ENCODE measurements at regions of chr12 and their contacts with region 1.

Region 1: DNA sequence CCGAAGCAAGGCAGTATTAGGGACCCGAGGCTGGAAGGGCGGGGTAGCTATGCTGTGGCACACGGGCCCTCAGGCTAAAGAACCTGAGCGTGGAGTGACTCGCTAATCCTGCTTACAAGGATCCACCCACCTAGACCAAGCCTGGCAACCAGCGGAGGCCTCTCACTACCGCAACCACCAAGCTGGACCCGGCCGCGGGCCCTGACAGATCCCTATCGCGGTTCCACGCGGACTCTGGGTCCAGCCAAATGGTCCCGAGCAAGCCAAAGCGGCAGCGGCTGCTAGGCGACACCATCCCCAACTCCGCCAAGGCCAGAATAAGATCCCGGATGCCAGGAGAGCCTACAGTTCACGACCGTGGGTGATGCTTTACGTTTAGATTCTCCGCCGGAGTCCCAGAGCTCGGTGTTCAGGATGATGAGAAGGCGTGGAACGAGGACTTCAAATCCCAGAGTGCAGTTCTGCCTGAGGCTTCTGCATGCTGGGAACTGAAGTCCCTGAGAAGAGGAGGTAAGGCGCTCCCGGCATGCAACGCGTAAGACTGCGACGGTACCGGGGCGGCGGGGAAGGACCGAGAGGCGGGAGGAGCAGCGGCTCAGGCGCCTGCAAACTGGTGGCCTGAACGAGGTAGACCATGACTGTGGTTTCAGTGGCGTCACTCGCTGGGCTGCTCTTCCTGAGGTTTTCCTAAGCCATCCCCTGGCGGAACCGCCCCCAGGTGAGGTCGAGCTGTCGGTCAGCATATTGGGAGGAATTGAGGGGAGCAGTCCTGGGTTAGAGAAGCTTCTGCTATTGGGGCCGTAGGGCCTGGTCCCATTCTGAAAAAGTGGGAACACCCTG is at the starts of genes CEP290 and TMTC3:
- DNase-seq: peak; percentile 95
- H3K4me3 Mint-ChIP-seq: peak within 1 kb of the TSS; percentile 91
- H3K27ac Mint-ChIP-seq: peak within 1 kb of the TSS; percentile 90
- H3K4me1 Mint-ChIP-seq: peaks cover 40% of the 10 kb centered on the region
- H3K27me3 Mint-ChIP-seq: no peaks in the 10 kb centered on the region
- total RNA-seq, gene CEP290: 12.7 to 13.6 TPM
- total RNA-seq, gene TMTC3: 5.2 TPM

Region 2: GRCh38 chr12:88127099-88127498 is 14.9 kb before region 1 on chr12:
- CTCF ChIA-PET with region 1: no interaction called
- intact Hi-C with region 1: no loop called
- DNase-seq: no peak
- H3K4me3 Mint-ChIP-seq: no peak overlapping the region
- H3K27ac Mint-ChIP-seq: no peak overlapping the region
- H3K4me1 Mint-ChIP-seq: no peaks in the 10 kb centered on the region
- H3K27me3 Mint-ChIP-seq: no peaks in the 10 kb centered on the region

Region 3: DNA sequence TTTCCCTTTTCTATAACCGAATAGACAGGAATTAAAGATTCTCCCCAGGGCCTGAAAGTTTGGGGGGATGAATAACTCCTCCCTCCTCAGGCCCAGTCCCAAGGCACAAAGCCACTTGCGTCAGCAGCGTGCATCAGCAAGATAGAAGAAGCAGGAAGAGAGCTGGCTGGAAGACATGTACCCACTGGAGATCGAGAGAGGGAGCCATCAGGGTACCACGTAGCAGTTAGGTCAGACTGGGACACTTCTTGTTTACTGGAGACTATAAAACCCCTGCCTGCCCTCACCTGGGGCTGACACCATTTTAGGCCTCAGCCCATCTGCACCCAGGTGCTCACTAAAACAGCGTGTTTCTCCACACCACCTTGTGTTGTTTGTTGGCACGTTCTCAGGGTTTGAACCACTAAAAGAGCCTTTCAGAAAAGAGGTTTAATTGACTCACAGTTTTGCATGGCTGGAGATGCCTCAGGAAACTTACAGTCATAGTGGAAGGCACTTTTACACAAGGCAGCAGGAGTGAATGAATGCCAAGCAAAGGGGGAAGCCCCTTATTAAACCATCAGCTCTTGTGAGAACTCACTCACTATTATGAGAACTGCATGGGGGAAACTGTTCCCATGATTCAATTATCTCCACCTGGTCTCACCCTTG is 93.3 kb after region 1 on chr12:
- CTCF ChIA-PET with region 1: interaction called, 6 read pairs
- intact Hi-C with region 1: loop called (anchors 1 kb)
- DNase-seq: peak; percentile 65
- H3K4me3 Mint-ChIP-seq: no peak overlapping the region
- H3K27ac Mint-ChIP-seq: no peak overlapping the region
- H3K4me1 Mint-ChIP-seq: peaks cover 29% of the 10 kb centered on the region
- H3K27me3 Mint-ChIP-seq: peaks cover 4% of the 10 kb centered on the region

Region 4: DNA sequence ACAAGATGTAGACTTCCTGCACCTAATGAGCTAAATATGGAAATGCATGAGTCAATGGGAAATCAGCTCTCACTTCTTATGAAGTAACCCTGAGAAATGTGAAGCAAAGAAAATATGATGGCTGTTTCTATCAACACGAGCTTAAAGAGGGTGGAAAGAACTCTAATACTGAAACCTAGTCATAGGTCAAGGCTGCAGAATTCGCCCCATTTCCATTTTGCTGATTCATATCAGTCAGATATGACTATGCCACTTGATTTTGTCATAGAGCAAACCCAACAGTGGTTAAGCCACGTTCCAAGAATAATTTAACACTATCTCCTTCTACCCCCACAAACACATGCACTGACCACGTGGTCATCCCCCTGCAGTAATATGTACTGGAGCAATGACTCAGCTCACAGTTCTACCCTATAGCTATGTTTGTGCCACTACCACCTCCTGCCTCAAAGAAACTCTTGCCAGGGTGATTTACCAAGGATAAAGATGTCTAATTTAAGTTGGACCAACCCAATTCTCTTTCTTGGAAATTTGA is 157.6 kb after region 1 on chr12:
- CTCF ChIA-PET with region 1: no interaction called
- intact Hi-C with region 1: loop called (anchors 2 kb)
- DNase-seq: peak; percentile 50
- H3K4me3 Mint-ChIP-seq: no peak overlapping the region
- H3K27ac Mint-ChIP-seq: peak overlapping the region; percentile 9
- H3K4me1 Mint-ChIP-seq: peaks cover 17% of the 10 kb centered on the region
- H3K27me3 Mint-ChIP-seq: peaks cover 5% of the 10 kb centered on the region

Region 5: GRCh38 chr12:89252284-89252683 is 1110.3 kb after region 1 on chr12:
- CTCF ChIA-PET with region 1: no interaction called
- intact Hi-C with region 1: loop called (anchors 5 kb)
- DNase-seq: peak; percentile 14
- H3K4me3 Mint-ChIP-seq: no peak overlapping the region
- H3K27ac Mint-ChIP-seq: peak overlapping the region; percentile 33
- H3K4me1 Mint-ChIP-seq: peaks cover 34% of the 10 kb centered on the region
- H3K27me3 Mint-ChIP-seq: no peaks in the 10 kb centered on the region

Region 6: DNA sequence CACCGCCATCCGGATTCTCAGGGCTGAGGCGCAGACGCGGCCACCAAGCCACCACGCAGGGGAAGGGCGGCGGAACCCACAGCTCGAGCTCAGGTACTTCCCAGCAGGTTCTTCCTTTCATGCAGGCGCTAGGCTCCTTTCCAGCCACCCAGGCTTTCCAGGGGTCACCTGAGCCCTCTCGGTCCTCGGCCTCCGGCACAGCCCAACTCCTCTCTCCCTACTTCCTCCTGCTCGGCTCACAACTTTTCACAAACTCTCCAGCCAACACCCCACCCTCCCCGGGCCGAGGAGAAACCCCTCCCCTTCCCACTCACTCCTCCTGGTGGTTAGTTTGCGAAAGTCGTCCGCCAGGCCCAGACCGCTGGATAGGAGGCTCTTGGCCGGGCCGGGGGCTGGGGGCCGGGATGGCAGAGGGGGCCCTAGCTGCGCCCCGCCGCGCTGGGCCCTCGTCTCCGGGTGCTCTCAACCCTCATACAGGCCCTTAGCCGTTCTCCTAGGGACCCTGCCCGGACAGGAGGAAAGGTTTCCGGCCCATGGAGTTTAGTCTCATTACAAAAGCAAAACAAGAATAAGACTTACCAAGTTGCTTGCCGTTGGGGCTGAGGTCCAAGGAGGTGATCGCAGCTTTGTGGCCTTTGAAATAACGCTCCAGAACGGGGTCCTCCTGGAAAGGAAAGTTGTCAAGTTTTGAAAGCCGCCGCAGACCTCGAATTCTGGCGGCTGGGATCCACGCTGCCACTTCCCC is 1382.7 kb after region 1 on chr12 and contains the start of gene GALNT4:
- CTCF ChIA-PET with region 1: no interaction called
- intact Hi-C with region 1: loop called (anchors 1 kb)
- DNase-seq: peak; percentile 80
- H3K4me3 Mint-ChIP-seq: peak within 1 kb of the TSS; percentile 94
- H3K27ac Mint-ChIP-seq: peak within 1 kb of the TSS; percentile 93
- H3K4me1 Mint-ChIP-seq: peaks cover 41% of the 10 kb centered on the region
- H3K27me3 Mint-ChIP-seq: no peaks in the 10 kb centered on the region
- total RNA-seq, gene GALNT4: 2.9 to 3.4 TPM